ENCODE measurements at regions of chr2 and their contacts with region 1.

Region 1: GRCh38 chr2:3518496-3519254 is 656 bp downstream of the ADI1 start:
- DNase-seq: peak; percentile 98
- ATAC-seq: peak; percentile 76
- H3K4me3 Mint-ChIP-seq: peak overlapping the region; percentile 85
- H3K27ac Mint-ChIP-seq: peak overlapping the region; percentile 91
- H3K4me1 Mint-ChIP-seq: peaks cover 38% of the 10 kb centered on the region
- H3K27me3 Mint-ChIP-seq: no peaks in the 10 kb centered on the region
- CTCF ChIP-seq: no peak

Region 2: GRCh38 chr2:3536682-3537632 is 18.3 kb after region 1 on chr2:
- CTCF ChIA-PET with region 1: no interaction called
- POLR2A ChIA-PET with region 1: interaction called, 4 read pairs
- intact Hi-C with region 1: loop called (anchors 2 kb)
- DNase-seq: no peak
- ATAC-seq: no peak
- H3K4me3 Mint-ChIP-seq: peak overlapping the region; percentile 70
- H3K27ac Mint-ChIP-seq: peak overlapping the region; percentile 46
- H3K4me1 Mint-ChIP-seq: peaks cover 11% of the 10 kb centered on the region
- H3K27me3 Mint-ChIP-seq: no peaks in the 10 kb centered on the region
- CTCF ChIP-seq: no peak

Region 3: DNA sequence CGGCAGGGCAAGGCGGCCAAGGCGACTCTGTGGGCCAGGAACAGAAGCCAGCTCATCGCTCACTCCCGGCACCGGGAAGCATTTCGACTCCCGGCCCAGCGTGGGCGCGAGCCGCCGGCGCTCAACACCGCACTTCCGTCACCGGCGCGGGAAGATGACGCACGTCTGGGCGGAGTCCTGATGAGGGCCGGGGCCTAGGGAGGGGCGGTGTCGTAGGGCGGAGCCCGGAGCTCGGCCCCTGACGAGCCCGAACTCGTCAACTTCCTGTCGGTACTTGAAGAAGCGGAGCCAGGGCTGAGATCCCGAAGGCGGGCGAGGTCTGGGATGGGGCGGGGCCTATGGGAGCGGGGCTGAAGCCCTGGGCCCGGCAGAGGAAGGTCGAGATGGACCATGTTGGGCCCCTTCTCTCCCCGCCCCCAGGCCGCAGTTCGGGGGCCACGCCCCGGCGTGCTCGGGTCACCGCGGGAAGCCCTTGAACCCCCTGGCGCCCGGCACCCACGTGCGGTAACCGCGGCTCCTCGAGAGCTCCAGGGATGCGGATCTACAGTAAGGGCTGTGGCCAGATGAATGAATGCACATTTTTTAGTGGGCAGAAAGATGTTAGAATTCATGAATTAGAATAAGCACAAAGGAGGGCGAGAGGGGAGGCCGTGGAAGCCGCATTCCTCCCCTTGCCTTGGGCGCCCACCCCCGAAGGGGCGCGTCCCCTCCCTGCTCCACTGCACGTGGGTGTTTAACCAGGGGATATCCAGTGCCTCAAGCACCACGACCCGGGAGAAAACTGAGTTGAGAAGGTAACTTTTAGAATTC is 39.7 kb after region 1 on chr2 and contains the start of gene RNASEH1:
- CTCF ChIA-PET with region 1: no interaction called
- POLR2A ChIA-PET with region 1: interaction called, 64 read pairs
- intact Hi-C with region 1: loop called (anchors 1 kb)
- DNase-seq: peak; percentile 99
- ATAC-seq: peak; percentile 95
- H3K4me3 Mint-ChIP-seq: peak within 1 kb of the TSS; percentile 91
- H3K27ac Mint-ChIP-seq: peak within 1 kb of the TSS; percentile 97
- H3K4me1 Mint-ChIP-seq: peaks cover 45% of the 10 kb centered on the region
- H3K27me3 Mint-ChIP-seq: no peaks in the 10 kb centered on the region
- CTCF ChIP-seq: no peak
- total RNA-seq, gene RNASEH1: 27.4 and 28.5 TPM in 2 replicates

Region 4: DNA sequence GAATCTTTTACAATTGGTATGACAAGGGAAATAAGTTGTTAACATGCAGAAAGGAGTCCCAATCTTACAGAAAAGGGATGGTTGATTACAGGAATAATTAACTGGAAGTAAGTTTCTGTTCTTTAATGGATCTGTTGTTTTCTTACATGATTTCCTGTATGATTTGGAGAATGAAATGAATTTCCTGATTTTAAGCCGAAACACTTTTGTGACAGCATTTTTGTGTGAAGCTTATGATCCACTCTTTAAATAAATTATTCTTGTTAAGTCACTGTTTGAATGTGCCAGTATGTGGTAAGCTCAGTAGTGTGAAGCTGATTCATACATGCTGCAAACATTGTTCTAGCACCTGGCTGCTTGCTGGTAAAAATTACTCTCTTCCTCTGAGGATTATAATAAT is 700.9 kb after region 1 on chr2:
- CTCF ChIA-PET with region 1: no interaction called
- POLR2A ChIA-PET with region 1: no interaction called
- intact Hi-C with region 1: no loop called
- DNase-seq: no peak
- ATAC-seq: no peak
- H3K4me3 Mint-ChIP-seq: no peak overlapping the region
- H3K27ac Mint-ChIP-seq: no peak overlapping the region
- H3K4me1 Mint-ChIP-seq: no peaks in the 10 kb centered on the region
- H3K27me3 Mint-ChIP-seq: no peaks in the 10 kb centered on the region
- CTCF ChIP-seq: no peak